Caco-2 (cell line): ENCODE measurements at regions of chr16 and their contacts with region 1.

Region 1: DNA sequence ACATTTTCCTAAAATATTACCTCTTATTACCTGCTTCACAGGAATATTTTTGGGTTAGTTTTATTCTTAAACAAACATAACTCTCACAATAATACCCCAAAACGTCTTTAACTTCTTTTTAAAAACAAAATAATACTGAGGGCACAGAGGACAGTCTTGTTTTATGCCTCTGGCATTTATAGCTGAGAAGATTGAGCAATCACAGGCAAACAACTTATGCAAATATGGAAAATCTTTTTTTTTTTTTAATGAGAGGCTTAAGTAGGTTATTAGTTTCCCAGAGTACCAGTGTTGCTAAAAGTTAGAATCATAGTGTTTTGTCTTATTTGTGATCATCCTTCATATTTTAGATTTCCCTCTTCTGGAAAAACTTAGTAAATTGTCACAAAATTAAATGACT is 195.0 kb downstream of the FTO start:
- DNase-seq: peak in 1 of 2 experiments; percentile 41
- H3K4me3 ChIP-seq: no peak overlapping the region
- H3K4me3 Mint-ChIP-seq: no peak overlapping the region
- H3K27ac Mint-ChIP-seq: peak overlapping the region; percentile 24
- H3K4me1 ChIP-seq: peaks cover 75% of the 10 kb centered on the region
- H3K4me1 Mint-ChIP-seq: peaks cover 76% of the 10 kb centered on the region
- H3K27me3 ChIP-seq: no peaks in the 10 kb centered on the region
- H3K27me3 Mint-ChIP-seq: no peaks in the 10 kb centered on the region
- CTCF ChIP-seq: no peak

Region 2: GRCh38 chr16:53865494-53865863 is 33.5 kb before region 1 on chr16:
- CTCF ChIA-PET with region 1: no interaction called
- POLR2A ChIA-PET with region 1: no interaction called
- intact Hi-C with region 1: no loop called
- DNase-seq: no peak
- H3K4me3 ChIP-seq: no peak overlapping the region
- H3K4me3 Mint-ChIP-seq: no peak overlapping the region
- H3K27ac Mint-ChIP-seq: no peak overlapping the region
- H3K4me1 ChIP-seq: no peaks in the 10 kb centered on the region
- H3K4me1 Mint-ChIP-seq: peaks cover 8% of the 10 kb centered on the region
- H3K27me3 ChIP-seq: no peaks in the 10 kb centered on the region
- H3K27me3 Mint-ChIP-seq: no peaks in the 10 kb centered on the region
- CTCF ChIP-seq: no peak

Region 3: DNA sequence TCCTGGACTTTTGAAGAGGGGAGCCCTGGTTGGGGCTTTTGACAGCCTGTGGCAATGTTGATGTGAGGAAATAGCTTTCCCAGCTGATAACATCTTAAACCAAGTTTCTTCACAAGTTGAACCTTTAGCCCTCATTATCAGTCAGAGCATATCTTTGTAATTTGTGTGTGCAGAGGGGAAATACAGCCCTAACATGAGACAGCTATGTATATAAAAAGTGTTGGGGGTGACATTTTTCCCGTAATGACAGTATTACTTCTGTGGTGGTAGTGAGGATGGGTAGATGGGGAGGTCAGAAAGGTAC is 26.1 kb after region 1 on chr16:
- CTCF ChIA-PET with region 1: interaction called, 9 read pairs
- POLR2A ChIA-PET with region 1: interaction called, 6 read pairs
- intact Hi-C with region 1: loop called (anchors 1 kb)
- DNase-seq: peak; percentile 81 to 82
- H3K4me3 ChIP-seq: no peak overlapping the region
- H3K4me3 Mint-ChIP-seq: peak overlapping the region; percentile 55
- H3K27ac Mint-ChIP-seq: peak overlapping the region; percentile 79
- H3K4me1 ChIP-seq: peaks cover 43% of the 10 kb centered on the region
- H3K4me1 Mint-ChIP-seq: peaks cover 28% of the 10 kb centered on the region
- H3K27me3 ChIP-seq: no peaks in the 10 kb centered on the region
- H3K27me3 Mint-ChIP-seq: no peaks in the 10 kb centered on the region
- CTCF ChIP-seq: no peak